Activated B cell treated with CpG ODN at 0.5 μM for 24 hours (primary cell): ENCODE measurements at regions of chr5 and their contacts with region 1.

Region 1: GRCh38 chr5:57298295-57298984 is 124.6 kb downstream of the GPBP1 start:
- DNase-seq: peak; percentile 35
- ATAC-seq: peak; percentile 90
- H3K4me3 Mint-ChIP-seq: peak overlapping the region; percentile 75
- H3K27ac Mint-ChIP-seq: no peak overlapping the region
- H3K4me1 Mint-ChIP-seq: peaks cover 16% of the 10 kb centered on the region
- H3K27me3 Mint-ChIP-seq: peaks cover 2% of the 10 kb centered on the region
- CTCF ChIP-seq: peak; percentile 48

Region 2: GRCh38 chr5:56264417-56265025 is 1033.9 kb before region 1 on chr5:
- CTCF ChIA-PET with region 1: no interaction called
- POLR2A ChIA-PET with region 1: no interaction called
- intact Hi-C with region 1: loop called (anchors 1 kb)
- DNase-seq: no peak
- ATAC-seq: peak; percentile 60
- H3K4me3 Mint-ChIP-seq: no peak overlapping the region
- H3K27ac Mint-ChIP-seq: no peak overlapping the region
- H3K4me1 Mint-ChIP-seq: peaks cover 2% of the 10 kb centered on the region
- H3K27me3 Mint-ChIP-seq: no peaks in the 10 kb centered on the region
- CTCF ChIP-seq: no peak

Region 3: DNA sequence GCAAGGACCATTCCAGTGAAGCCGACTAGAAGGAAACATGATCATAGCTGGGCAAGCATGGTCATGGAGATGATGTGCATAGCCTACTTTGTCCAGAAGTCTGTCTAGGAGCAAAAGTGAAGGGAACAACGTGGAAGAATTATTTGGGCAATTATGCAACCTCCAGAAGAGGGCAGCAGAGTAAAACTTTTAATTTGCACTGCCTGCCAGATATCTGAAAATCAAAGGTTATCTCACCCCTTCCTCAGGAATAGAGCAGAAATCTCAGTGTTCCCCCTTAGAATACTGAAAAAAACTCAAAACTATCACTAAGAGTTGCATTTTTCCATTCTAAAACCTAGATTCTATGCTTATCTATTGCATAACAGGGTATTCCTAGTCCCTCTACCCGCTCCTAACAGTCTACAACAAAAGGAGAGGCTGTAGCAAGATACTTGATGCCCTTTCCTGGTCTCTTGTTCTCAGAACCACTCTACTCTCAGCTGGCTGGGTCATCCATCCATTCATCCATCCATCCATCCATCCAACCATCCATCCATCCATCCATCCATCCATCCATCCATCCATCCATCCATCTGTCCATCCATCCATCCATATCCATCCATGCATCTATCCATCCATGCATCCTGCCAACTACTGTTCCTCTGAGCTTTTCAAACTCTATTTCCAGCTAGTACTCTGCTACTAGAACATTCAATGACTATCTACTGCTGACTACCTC is 397.4 kb before region 1 on chr5:
- CTCF ChIA-PET with region 1: interaction called, 6 read pairs
- POLR2A ChIA-PET with region 1: no interaction called
- intact Hi-C with region 1: loop called (anchors 1 kb)
- DNase-seq: no peak
- ATAC-seq: peak; percentile 68
- H3K4me3 Mint-ChIP-seq: no peak overlapping the region
- H3K27ac Mint-ChIP-seq: no peak overlapping the region
- H3K4me1 Mint-ChIP-seq: no peaks in the 10 kb centered on the region
- H3K27me3 Mint-ChIP-seq: no peaks in the 10 kb centered on the region
- CTCF ChIP-seq: peak; percentile 10

Region 4: GRCh38 chr5:57366744-57367143 is 68.3 kb after region 1 on chr5:
- CTCF ChIA-PET with region 1: no interaction called
- POLR2A ChIA-PET with region 1: no interaction called
- intact Hi-C with region 1: no loop called
- DNase-seq: no peak
- ATAC-seq: no peak
- H3K4me3 Mint-ChIP-seq: no peak overlapping the region
- H3K27ac Mint-ChIP-seq: no peak overlapping the region
- H3K4me1 Mint-ChIP-seq: no peaks in the 10 kb centered on the region
- H3K27me3 Mint-ChIP-seq: peaks cover 5% of the 10 kb centered on the region
- CTCF ChIP-seq: no peak

Region 5: DNA sequence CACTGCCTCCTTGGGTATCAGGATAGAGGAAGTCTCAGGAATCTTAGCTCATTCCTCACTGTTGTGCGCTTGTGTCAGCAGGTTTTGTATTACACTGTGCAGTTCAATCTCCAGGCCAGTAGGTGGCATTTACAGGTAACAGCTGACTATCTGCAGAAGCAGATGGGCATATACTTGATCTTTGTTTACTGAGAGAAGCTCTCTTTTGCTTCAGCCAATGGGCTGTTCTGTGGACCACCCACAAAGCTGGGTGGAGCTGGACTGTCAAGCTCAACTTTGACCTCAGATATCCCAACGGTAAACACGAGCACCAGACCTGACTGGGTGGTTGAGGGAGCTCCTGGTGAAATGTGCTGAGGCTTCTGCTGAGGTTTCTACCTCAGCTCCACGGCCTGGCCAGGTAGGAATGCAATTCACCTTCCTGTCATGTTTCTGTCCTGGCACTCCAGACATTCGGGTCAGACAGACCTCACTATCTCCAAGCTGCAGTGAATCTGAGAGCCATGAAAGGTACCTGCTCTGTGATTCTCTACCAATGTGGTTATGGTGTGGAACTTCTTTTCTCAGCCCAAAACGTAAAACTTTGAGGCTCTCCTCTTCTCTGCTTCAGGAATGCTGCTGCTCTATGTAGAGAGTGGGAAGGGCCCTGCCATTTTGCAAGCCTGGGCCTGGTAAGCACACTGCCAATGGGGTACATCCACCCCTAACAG is 352.1 kb after region 1 on chr5:
- CTCF ChIA-PET with region 1: no interaction called
- POLR2A ChIA-PET with region 1: no interaction called
- intact Hi-C with region 1: loop called (anchors 10 kb)
- DNase-seq: no peak
- ATAC-seq: peak; percentile 50
- H3K4me3 Mint-ChIP-seq: no peak overlapping the region
- H3K27ac Mint-ChIP-seq: no peak overlapping the region
- H3K4me1 Mint-ChIP-seq: no peaks in the 10 kb centered on the region
- H3K27me3 Mint-ChIP-seq: peaks cover 4% of the 10 kb centered on the region
- CTCF ChIP-seq: peak; percentile 16

Region 6: DNA sequence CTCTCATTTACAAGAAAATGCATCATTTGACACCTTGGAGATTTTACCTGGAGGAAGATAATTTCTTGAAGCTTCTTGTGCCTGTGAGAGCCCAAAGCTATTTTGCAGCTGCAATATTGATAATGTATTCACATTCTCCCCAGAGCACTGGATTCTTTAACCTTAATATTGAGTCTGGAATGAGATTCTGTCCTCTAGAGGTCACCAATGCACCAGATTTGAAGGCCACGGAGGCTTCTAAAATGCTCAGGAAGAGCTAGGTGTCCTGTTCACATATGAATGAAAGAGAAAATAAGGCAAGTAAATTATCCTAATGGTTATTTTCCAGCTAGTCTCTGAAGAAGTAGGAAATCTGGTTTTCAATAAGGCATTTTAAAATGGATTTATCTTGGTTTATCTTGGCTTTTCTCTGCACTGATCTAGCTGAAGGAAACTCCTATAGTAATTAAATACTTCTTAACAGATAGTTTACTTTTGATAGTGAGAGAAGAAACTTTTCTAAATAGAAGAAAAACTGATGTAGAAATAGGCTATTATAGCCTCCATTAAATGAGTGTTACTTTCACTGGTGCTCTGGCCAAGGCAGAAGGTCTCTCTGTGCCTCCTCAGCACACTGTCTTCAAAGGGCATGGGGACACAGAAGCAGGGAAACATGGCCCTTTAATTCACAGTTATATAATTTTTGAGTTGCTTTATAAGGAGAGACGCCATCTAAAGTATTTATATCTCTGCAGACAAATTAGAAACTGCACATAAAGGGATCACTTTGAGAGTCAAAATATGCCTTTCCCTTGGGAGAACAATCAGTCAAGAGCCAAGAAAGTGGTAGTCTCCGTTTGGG is 481.2 kb after region 1 on chr5:
- CTCF ChIA-PET with region 1: no interaction called
- POLR2A ChIA-PET with region 1: no interaction called
- intact Hi-C with region 1: loop called (anchors 2 kb)
- DNase-seq: no peak
- ATAC-seq: peak; percentile 31
- H3K4me3 Mint-ChIP-seq: no peak overlapping the region
- H3K27ac Mint-ChIP-seq: no peak overlapping the region
- H3K4me1 Mint-ChIP-seq: no peaks in the 10 kb centered on the region
- H3K27me3 Mint-ChIP-seq: peaks cover 2% of the 10 kb centered on the region
- CTCF ChIP-seq: no peak

Region 7: DNA sequence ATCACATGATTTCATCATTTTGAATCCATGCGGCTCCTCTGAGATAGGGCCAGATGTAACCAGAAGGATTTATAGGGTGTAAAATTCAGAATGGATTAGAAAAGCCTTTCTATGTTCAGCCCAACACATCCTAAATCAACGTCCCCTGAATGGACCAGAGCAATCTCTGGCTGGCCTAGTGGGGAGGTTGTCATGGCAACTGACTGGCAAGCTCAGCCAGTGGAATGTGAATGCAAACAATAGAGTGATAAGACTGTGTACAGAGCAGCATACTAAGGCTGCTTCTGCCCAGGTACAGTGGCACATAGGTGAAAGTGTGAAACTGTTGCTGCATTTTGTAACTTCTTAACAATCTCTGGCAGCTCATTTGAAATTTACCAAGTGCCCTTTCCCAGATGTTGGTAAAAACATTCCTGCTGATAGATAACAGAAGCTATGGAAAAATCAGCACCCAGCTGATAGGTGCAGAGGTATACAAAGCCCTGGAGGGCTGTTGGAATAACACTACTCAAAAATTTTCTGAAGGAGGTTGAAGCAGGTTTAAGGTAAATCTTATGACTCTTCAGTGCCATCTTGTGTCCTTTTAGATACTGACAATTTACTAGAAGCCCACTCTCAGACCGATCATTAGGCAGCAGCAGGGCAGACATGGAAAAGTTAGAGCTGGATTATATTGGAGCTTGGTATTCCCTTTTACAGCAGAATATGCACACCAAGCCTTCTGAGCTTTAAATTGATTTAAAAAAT is 1551.7 kb after region 1 on chr5:
- CTCF ChIA-PET with region 1: interaction called, 5 read pairs
- POLR2A ChIA-PET with region 1: no interaction called
- intact Hi-C with region 1: loop called (anchors 1 kb)
- DNase-seq: no peak
- ATAC-seq: peak; percentile 64
- H3K4me3 Mint-ChIP-seq: no peak overlapping the region
- H3K27ac Mint-ChIP-seq: no peak overlapping the region
- H3K4me1 Mint-ChIP-seq: peaks cover 2% of the 10 kb centered on the region
- H3K27me3 Mint-ChIP-seq: no peaks in the 10 kb centered on the region
- CTCF ChIP-seq: peak; percentile 76